ENCODE measurements at regions of chr10 and their contacts with region 1.

Region 1: DNA sequence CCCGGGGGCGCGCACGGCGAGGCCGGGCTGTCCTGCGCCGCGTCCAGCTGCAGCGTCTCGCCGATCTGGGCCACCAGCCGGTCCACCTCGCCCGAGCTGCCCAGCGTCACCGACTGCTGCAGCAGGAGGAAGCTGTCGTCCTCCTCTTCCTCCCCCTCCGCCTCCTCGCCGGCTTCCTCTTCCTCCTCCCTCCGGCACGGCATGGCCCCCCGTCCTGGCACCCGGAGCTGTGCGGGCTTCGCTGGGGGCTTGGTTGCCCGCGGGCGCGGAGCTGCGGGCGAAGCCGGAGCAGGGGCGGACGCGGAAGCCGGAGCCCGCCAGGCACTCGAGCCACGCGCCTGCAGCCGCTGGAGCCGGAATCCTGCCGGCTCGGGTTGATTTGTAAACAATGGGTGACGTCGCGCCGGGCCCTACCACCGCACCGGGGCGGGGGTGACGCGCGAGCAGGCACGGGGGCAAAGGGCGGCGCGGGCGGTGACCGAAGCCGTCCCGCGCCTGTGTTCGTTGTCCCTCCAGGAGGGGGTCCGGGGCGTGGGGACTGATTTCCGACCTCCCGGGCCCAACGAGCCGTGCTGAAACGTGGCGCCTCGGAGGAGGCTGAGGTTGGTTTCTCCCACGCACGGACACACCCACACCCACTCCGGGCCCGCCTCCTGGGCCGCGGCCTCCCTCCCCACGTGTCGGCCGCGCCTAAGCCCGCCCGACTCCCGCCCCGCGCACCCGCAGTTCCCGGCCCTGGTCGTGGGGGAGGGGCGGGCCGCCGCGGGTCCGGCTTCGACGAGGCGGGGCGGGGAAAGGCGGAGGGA is at the start of gene FRAT2:
- DNase-seq: peak; percentile 82 to 98 (median 87)

Region 2: GRCh38 chr10:97278491-97278989 is 56.0 kb before region 1 on chr10:
- intact Hi-C with region 1: loop called (anchors 2 kb)
- DNase-seq: no peak

Region 3: DNA sequence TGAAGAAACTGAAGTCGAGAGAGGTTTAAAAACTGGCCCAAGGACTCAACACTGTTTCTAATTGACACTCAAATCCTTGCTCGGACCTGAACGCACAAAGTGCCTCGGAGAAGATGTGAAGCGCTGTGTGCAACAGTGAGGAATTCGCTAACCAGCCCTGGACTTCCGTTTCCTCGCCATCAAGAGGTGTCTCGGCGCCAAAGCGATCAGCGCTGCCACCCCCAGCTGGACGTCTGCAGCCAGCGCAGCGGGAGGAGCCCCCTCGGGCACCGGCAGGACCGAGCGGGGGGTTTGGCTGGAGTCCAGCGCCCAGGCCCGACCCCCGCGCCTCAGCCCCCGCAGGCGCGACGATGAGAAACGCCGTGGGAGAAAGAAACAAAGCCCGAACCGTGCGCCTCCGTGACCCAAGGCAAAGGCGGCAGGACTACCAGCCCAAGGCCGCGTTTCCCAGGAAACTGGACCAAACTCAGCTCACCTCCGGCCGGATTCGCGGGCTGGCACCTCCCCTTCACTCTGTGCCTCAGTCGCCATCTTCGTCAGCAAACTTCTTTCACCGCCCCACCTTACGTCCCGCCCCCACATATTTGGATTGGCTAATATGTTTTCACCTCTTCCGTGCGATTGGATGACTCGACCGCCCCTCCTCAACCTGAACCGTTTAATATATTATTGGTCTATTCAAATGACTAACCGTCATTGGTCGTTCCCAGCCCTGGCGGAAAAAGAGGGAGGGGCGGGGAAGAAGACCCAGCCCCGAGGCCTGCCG is 42.3 kb before region 1 on chr10 and contains the start of gene ARHGAP19:
- intact Hi-C with region 1: loop called (anchors 5 kb)
- DNase-seq: peak; percentile 87 to 99 (median 92)

Region 4: GRCh38 chr10:97318772-97319651 is 15.6 kb before region 1 on chr10 and contains the start of gene FRAT1:
- intact Hi-C with region 1: loop called (anchors 1 kb)
- DNase-seq: peak; percentile 78 to 98 (median 89)

Region 5: GRCh38 chr10:97400665-97401454 is 66.3 kb after region 1 on chr10 and contains the start of gene RRP12:
- intact Hi-C with region 1: no loop called
- DNase-seq: peak; percentile 51 to 96 (median 82)

Region 6: DNA sequence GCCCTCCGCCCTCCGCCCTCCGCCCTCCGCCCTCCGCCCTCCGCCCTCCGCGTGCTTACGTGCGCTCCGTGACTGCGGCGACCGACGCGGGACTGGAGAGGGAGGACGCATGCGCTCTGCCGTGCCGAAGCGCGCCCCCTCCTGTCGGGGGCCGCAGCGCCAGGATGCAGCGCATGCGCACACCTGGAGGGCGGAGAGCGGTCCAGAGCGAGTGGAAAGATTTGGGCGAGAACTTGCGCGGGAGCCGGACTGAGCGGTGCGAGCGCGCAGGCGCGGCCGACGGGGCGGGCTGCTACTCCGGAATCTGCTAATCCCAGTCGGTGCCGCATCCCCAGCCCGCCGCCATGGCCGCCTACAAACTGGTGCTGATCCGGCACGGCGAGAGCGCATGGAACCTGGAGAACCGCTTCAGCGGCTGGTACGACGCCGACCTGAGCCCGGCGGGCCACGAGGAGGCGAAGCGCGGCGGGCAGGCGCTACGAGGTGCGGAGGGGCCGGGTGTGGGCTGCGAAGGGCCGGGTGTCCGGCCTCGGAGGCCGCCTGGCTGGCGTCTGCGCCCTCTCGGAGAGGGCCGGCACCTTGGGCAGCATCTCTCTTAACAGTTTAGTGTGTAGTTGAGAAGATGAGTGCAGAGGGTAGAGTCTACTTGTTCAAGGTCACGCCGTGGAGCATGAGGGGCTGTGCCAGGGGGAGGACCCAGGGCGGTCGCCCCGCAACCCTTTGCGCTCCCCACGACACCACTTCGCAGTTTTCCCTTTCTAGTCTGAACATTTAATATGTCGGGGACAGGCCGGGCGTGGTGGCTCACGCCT is 91.6 kb after region 1 on chr10 and contains the start of gene PGAM1:
- intact Hi-C with region 1: no loop called
- DNase-seq: peak; percentile 90 to 99 (median 94)